ENCODE measurements at regions of chr6 and their contacts with region 1.

Region 1: DNA sequence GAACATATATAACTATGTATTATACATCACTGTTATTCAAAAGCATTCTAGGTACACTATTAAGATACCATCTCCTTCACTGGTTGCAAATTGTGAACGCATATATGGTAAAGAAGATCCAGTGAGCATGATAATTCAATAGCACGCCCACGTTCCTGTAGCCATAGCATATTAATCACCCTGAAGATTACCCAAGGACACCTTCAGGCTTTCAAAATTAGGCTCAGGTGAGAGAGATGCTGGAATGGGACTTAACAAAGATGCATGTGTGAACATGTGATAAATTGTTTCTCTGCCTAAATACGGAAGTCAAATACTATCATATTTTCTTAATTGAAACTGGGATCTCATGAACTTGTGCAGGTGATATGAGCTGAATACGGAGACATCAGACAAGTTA is 303.5 kb downstream of the PTPRK start:
- DNase-seq: no peak
- ATAC-seq: no peak
- H3K4me3 ChIP-seq: no peak overlapping the region
- H3K27ac ChIP-seq: no peak overlapping the region
- H3K4me1 ChIP-seq: no peaks in the 10 kb centered on the region
- H3K27me3 ChIP-seq: no peaks in the 10 kb centered on the region
- CTCF ChIP-seq: no peak
- POLR2A ChIP-seq: no peak
- RAD21 ChIP-seq: no peak

Region 2: GRCh38 chr6:128271527-128271926 is 54.6 kb after region 1 on chr6:
- CTCF ChIA-PET with region 1: no interaction called
- POLR2A ChIA-PET with region 1: no interaction called
- RAD21 ChIA-PET with region 1: no interaction called
- intact Hi-C with region 1: loop called (anchors 2 kb)
- DNase-seq: no peak
- ATAC-seq: no peak
- H3K4me3 ChIP-seq: no peak overlapping the region
- H3K27ac ChIP-seq: no peak overlapping the region
- H3K4me1 ChIP-seq: no peaks in the 10 kb centered on the region
- H3K27me3 ChIP-seq: no peaks in the 10 kb centered on the region
- CTCF ChIP-seq: no peak
- POLR2A ChIP-seq: no peak
- RAD21 ChIP-seq: no peak

Measured in HCT116 (cell line).